ENCODE measurements at regions of chr1 and their contacts with region 1.

Region 1: DNA sequence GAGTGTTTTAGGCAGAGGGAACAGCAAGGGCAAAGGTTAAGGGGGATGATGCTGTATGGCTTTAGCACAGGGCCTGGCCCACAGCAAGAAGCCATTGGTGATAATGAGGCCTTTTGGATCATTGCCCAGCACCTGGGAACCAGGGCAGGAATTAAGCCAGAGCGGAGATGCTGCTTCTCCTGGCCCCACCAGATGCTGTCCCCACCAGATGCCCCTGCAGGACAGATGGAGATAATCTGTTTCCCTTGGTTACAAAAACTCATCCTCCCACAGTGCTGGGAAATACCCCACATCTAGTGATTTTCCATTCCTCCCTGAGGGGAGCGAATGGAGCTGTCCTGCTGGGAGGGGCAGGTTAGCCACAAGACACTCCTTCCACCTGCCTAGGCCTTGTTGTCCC is 18.8 kb downstream of the OPRD1 start:
- DNase-seq: no peak
- ATAC-seq: no peak
- H3K4me3 ChIP-seq: no peak overlapping the region
- H3K27ac ChIP-seq: no peak overlapping the region
- H3K4me1 ChIP-seq: peaks cover 7% of the 10 kb centered on the region
- H3K27me3 ChIP-seq: no peaks in the 10 kb centered on the region
- CTCF ChIP-seq: no peak

Region 2: GRCh38 chr1:26921540-26922430 is 1909.0 kb before region 1 on chr1 and contains the start of gene NUDC:
- CTCF ChIA-PET with region 1: no interaction called
- POLR2A ChIA-PET with region 1: interaction called, 15 read pairs
- intact Hi-C with region 1: no loop called
- DNase-seq: peak; percentile 98
- ATAC-seq: peak; percentile 92
- H3K4me3 ChIP-seq: peak within 1 kb of the TSS; percentile 83
- H3K27ac ChIP-seq: peak within 1 kb of the TSS; percentile 67
- H3K4me1 ChIP-seq: peaks cover 30% of the 10 kb centered on the region
- H3K27me3 ChIP-seq: no peaks in the 10 kb centered on the region
- CTCF ChIP-seq: no peak
- total RNA-seq, gene NUDC: 149 and 198 TPM in 2 replicates

Region 3: GRCh38 chr1:27992276-27992675 is 838.5 kb before region 1 on chr1:
- CTCF ChIA-PET with region 1: no interaction called
- POLR2A ChIA-PET with region 1: no interaction called
- intact Hi-C with region 1: no loop called
- DNase-seq: no peak
- ATAC-seq: no peak
- H3K4me3 ChIP-seq: no peak overlapping the region
- H3K27ac ChIP-seq: no peak overlapping the region
- H3K4me1 ChIP-seq: no peaks in the 10 kb centered on the region
- H3K27me3 ChIP-seq: no peaks in the 10 kb centered on the region
- CTCF ChIP-seq: no peak

Region 4: DNA sequence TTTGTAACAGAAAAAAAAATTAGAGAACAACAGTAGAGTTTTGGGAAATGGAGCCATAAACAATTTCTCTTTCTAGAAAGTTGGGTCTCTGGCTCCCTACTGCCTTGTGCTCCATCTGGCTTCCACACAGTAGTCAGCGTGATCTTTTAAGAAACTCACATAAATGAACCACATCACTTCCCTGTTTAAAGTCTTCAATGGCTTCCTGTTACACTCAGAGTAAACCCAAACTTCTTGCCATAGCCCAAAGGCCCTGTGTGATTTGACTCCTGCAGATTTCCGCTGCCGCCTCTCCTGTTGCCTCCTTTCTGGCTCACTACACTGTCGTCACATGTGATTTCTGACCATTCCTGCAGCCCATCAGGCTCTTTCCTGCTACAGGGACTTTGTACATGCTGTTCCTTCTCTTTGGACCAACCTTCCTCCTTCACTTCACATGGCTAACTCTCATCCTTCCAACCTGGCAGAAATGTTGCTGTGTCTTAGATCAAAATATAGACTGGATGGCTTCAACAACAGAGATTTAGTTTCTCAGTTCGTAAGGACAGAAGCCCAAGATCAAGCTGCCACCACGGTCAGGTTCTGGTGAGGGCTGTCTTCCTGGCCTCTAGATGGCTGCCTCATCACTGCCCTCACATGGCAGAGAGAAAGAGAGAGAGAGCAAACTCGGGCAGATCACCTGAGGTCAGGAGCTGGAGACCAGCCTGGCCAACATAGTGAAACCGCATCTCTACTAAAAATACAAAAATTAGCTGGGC is 15.2 kb after region 1 on chr1:
- CTCF ChIA-PET with region 1: interaction called, 8 read pairs
- POLR2A ChIA-PET with region 1: interaction called, 23 read pairs
- intact Hi-C with region 1: no loop called
- DNase-seq: peak; percentile 65
- ATAC-seq: peak; percentile 89
- H3K4me3 ChIP-seq: no peak overlapping the region
- H3K27ac ChIP-seq: no peak overlapping the region
- H3K4me1 ChIP-seq: peaks cover 3% of the 10 kb centered on the region; the same call in 1 of the 2 replicates
- H3K27me3 ChIP-seq: no peaks in the 10 kb centered on the region
- CTCF ChIP-seq: peak; percentile 55

Measured in PC-3 (cell line).